Left cardiac atrium (tissue), 4 donors: ENCODE measurements at regions of chr5 and their contacts with region 1.

Region 1: GRCh38 chr5:178428341-178428964 is 161.7 kb downstream of the COL23A1 start:
- DNase-seq: peak; percentile 74
- ATAC-seq: peak; percentile 92

Region 2: DNA sequence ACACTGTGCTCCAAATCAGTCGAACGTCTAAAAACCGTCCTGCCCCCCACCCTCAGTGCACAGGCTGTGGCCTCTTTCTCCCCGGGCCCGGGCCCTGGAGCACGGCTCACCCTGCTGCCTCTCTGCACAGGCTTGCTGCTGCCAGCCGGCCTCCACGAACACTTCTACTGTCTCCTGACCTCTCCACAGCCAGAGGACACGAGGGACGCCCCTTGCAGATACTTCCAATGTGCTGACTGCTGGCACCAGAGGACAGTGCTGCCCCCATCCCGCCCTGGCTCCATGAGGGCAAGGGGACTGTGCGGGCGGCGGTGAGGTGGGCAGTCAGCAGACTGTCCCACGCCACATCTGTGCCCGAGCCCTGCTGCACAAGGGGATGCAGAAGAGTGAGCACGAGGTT is 13.1 kb before region 1 on chr5:
- intact Hi-C with region 1: loop called in 1 of 2 experiments (anchors 1 kb)
- DNase-seq: no peak
- ATAC-seq: no peak